ENCODE measurements at regions of chr13 and their contacts with region 1.

Region 1: GRCh38 chr13:20945952-20946383 is 43.4 kb upstream of the XPO4 start:
- DNase-seq: peak; percentile 18
- H3K4me3 ChIP-seq: peak overlapping the region; percentile 50
- H3K27ac ChIP-seq: no peak overlapping the region
- H3K4me1 ChIP-seq: peaks cover 5% of the 10 kb centered on the region
- H3K27me3 ChIP-seq: peaks cover 21% of the 10 kb centered on the region
- CTCF ChIP-seq: no peak

Region 2: GRCh38 chr13:20851844-20852402 is 94.0 kb before region 1 on chr13:
- intact Hi-C with region 1: no loop called
- DNase-seq: no peak
- H3K4me3 ChIP-seq: no peak overlapping the region
- H3K27ac ChIP-seq: peak overlapping the region; percentile 7
- H3K4me1 ChIP-seq: peaks cover 41% of the 10 kb centered on the region
- H3K27me3 ChIP-seq: no peaks in the 10 kb centered on the region
- CTCF ChIP-seq: no peak

Region 3: GRCh38 chr13:20882206-20882605 is 63.8 kb before region 1 on chr13:
- intact Hi-C with region 1: no loop called
- DNase-seq: no peak
- H3K4me3 ChIP-seq: no peak overlapping the region
- H3K27ac ChIP-seq: no peak overlapping the region
- H3K4me1 ChIP-seq: peaks cover 37% of the 10 kb centered on the region
- H3K27me3 ChIP-seq: no peaks in the 10 kb centered on the region
- CTCF ChIP-seq: no peak

Region 4: GRCh38 chr13:21137696-21138095 is 191.7 kb after region 1 on chr13:
- intact Hi-C with region 1: loop called (anchors 10 kb)
- DNase-seq: no peak
- H3K4me3 ChIP-seq: no peak overlapping the region
- H3K27ac ChIP-seq: no peak overlapping the region
- H3K4me1 ChIP-seq: peaks cover 25% of the 10 kb centered on the region
- H3K27me3 ChIP-seq: no peaks in the 10 kb centered on the region
- CTCF ChIP-seq: no peak

Measured in left ventricle myocardium inferior (tissue), 1 donor.